ENCODE measurements at regions of chr11 and their contacts with region 1.

Region 1: GRCh38 chr11:32297611-32298011 is 137.7 kb downstream of the WT1 start:
- ATAC-seq: peak; percentile 40 to 94 (median 53)
- H3K4me3 ChIP-seq: no peak overlapping the region
- H3K27ac ChIP-seq: no peak overlapping the region
- H3K4me1 ChIP-seq: peaks cover 0 to 3% of the 10 kb centered on the region in 2 donors

Region 2: DNA sequence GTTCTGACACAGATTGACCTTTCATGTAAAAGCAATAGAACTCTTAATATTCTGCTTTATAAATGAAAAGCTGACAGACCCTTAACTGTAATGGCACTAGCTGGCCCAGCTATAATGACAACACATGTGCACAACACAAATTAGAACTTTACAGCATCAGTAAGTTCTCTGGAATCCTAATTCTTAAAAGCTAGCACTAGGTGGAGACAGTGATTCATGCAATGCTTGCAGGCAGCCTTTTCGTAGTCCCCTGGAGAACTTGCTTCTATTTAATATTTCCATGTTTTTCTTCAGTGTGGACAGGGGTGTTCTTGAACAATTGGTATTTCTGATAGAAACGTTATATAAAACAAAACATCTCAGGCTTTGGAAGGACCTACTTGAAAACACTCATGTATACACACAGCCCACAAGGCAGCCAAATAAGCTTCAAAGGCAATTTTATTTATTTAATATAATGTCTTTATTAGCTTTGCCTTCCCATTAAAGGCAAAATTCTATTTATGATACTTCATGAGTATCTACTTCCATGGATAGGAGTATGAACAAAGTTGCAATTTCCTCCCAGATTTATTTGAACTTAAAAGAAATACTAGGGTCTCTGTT is 1337.1 kb before region 1 on chr11:
- in situ Hi-C with region 1: loop called in 1 of 9 experiments (anchors 25 kb)
- ATAC-seq: peak in 5 of 8 experiments; percentile 32 to 80 (median 59)
- H3K4me3 ChIP-seq: no peak overlapping the region
- H3K27ac ChIP-seq: no peak overlapping the region
- H3K4me1 ChIP-seq: no peaks in the 10 kb centered on the region